Activated T-helper 1 cell treated with anti-CD3 and anti-CD28 coated beads, Interleukin-12 subunit alpha, Interleukin-12 subunit beta, Interleukin-2, Interleukin-4 antibody, amounts not matched to agents 30 ng/mL and 10 ng/mL and 1 ng/mL, durations not matched to agents 14 hours and 24 hours and 36 hours (primary cell): ENCODE measurements at regions of chr6 and their contacts with region 1.

Region 1: GRCh38 chr6:50214937-50215336 is 165.2 kb upstream of the DEFB112 start:
- DNase-seq: no peak
- H3K4me3 Mint-ChIP-seq: no peak overlapping the region
- H3K27ac Mint-ChIP-seq: no peak overlapping the region
- H3K4me1 Mint-ChIP-seq: no peaks in the 10 kb centered on the region
- H3K27me3 Mint-ChIP-seq: no peaks in the 10 kb centered on the region

Region 2: GRCh38 chr6:50451826-50452400 is 237.0 kb after region 1 on chr6:
- intact Hi-C with region 1: loop called (anchors 5 kb)
- DNase-seq: no peak
- H3K4me3 Mint-ChIP-seq: no peak overlapping the region
- H3K27ac Mint-ChIP-seq: no peak overlapping the region
- H3K4me1 Mint-ChIP-seq: no peaks in the 10 kb centered on the region
- H3K27me3 Mint-ChIP-seq: no peaks in the 10 kb centered on the region